CD8-positive, alpha-beta memory T cell (primary cell): ENCODE measurements at regions of chr2 and their contacts with region 1.

Region 1: GRCh38 chr2:120312861-120313694 is 32.9 kb upstream of the INHBB start:
- DNase-seq: peak; percentile 39 to 74 (median 46)
- H3K4me3 ChIP-seq: peak overlapping the region; percentile 54
- H3K4me3 Mint-ChIP-seq: peak overlapping the region; percentile 38 to 92 (median 81)
- H3K27ac ChIP-seq: no peak overlapping the region
- H3K27ac Mint-ChIP-seq: peak overlapping the region in 4 of 8 donors; percentile 51 to 83 (median 68)
- H3K4me1 ChIP-seq: peaks cover 9% of the 10 kb centered on the region
- H3K4me1 Mint-ChIP-seq: peaks cover 15 to 24% (median 16%) of the 10 kb centered on the region in 3 donors
- H3K27me3 ChIP-seq: no peaks in the 10 kb centered on the region
- H3K27me3 Mint-ChIP-seq: peaks cover 8 to 11% of the 10 kb centered on the region in 2 donors

Region 2: GRCh38 chr2:119702918-119703401 is 610.1 kb before region 1 on chr2:
- CTCF ChIA-PET with region 1: interaction called, 13 read pairs
- POLR2A ChIA-PET with region 1: no interaction called
- DNase-seq: peak; percentile 56 to 75 (median 61)
- H3K4me3 ChIP-seq: no peak overlapping the region
- H3K4me3 Mint-ChIP-seq: peak overlapping the region in 1 of 7 donors; percentile 40
- H3K27ac ChIP-seq: no peak overlapping the region
- H3K27ac Mint-ChIP-seq: peak overlapping the region in 3 of 8 donors; percentile 43 to 96 (median 47)
- H3K4me1 ChIP-seq: peaks cover 12% of the 10 kb centered on the region
- H3K4me1 Mint-ChIP-seq: peaks cover 6 to 21% (median 14%) of the 10 kb centered on the region in 3 donors
- H3K27me3 ChIP-seq: no peaks in the 10 kb centered on the region
- H3K27me3 Mint-ChIP-seq: peaks cover 6 to 31% of the 10 kb centered on the region in 2 donors

Region 3: GRCh38 chr2:119809339-119810048 is 503.6 kb before region 1 on chr2:
- CTCF ChIA-PET with region 1: no interaction called
- POLR2A ChIA-PET with region 1: no interaction called
- DNase-seq: no peak
- H3K4me3 ChIP-seq: no peak overlapping the region
- H3K4me3 Mint-ChIP-seq: no peak overlapping the region
- H3K27ac ChIP-seq: no peak overlapping the region
- H3K27ac Mint-ChIP-seq: peak overlapping the region in 3 of 8 donors; percentile 3 to 71 (median 13)
- H3K4me1 ChIP-seq: no peaks in the 10 kb centered on the region
- H3K4me1 Mint-ChIP-seq: peaks cover 44 to 71% (median 67%) of the 10 kb centered on the region in 3 donors
- H3K27me3 ChIP-seq: no peaks in the 10 kb centered on the region
- H3K27me3 Mint-ChIP-seq: no peaks in the 10 kb centered on the region

Region 4: GRCh38 chr2:120109186-120110061 is 203.7 kb before region 1 on chr2:
- CTCF ChIA-PET with region 1: interaction called, 19 read pairs
- POLR2A ChIA-PET with region 1: no interaction called
- DNase-seq: peak in 2 of 5 donors; percentile 38 to 55
- H3K4me3 ChIP-seq: peak overlapping the region; percentile 38
- H3K4me3 Mint-ChIP-seq: peak overlapping the region; percentile 32 to 89 (median 67)
- H3K27ac ChIP-seq: no peak overlapping the region
- H3K27ac Mint-ChIP-seq: peak overlapping the region in 7 of 8 donors; percentile 52 to 78 (median 71)
- H3K4me1 ChIP-seq: peaks cover 20% of the 10 kb centered on the region
- H3K4me1 Mint-ChIP-seq: peaks cover 22 to 26% (median 23%) of the 10 kb centered on the region in 3 donors
- H3K27me3 ChIP-seq: no peaks in the 10 kb centered on the region
- H3K27me3 Mint-ChIP-seq: peaks cover 0 to 2% of the 10 kb centered on the region in 2 donors

Region 5: GRCh38 chr2:120272763-120273481 is 40.2 kb before region 1 on chr2:
- CTCF ChIA-PET with region 1: no interaction called
- POLR2A ChIA-PET with region 1: no interaction called
- DNase-seq: no peak
- H3K4me3 ChIP-seq: no peak overlapping the region
- H3K4me3 Mint-ChIP-seq: no peak overlapping the region
- H3K27ac ChIP-seq: no peak overlapping the region
- H3K27ac Mint-ChIP-seq: no peak overlapping the region
- H3K4me1 ChIP-seq: no peaks in the 10 kb centered on the region
- H3K4me1 Mint-ChIP-seq: peaks cover 19 to 38% (median 21%) of the 10 kb centered on the region in 3 donors
- H3K27me3 ChIP-seq: no peaks in the 10 kb centered on the region
- H3K27me3 Mint-ChIP-seq: no peaks in the 10 kb centered on the region

Region 6: DNA sequence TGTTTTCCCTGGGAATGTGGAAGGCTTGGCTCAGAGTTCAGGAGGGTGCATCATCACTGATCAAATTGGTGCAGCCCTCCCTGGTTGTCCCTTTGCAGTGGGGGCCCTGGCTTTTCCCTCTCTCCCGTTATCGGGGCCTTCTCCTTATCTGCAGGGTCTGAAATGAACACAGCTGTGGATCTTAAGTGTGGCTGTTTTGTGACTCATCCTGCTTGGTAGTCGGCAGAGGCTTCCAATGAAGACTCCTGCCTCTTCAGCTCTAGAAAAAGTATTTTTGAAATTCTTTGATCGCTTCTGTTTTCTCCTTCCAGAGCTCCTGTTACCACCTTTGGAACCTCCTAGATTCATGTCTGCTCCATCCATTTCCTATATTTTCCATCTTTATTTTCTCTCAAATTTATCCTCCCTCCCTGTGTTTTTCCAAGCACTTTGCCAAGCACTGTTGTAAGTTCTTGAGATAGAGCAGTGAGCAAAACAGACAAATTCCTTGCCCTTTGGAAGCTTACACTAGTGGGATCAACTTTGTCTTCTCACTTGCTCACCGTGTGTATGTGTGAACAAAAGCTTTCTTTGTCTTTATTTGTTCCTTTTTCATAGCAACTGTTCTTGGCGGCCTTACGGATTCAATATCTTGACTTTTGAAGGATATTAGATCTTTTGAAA is 14.8 kb before region 1 on chr2:
- CTCF ChIA-PET with region 1: interaction called, 10 read pairs
- POLR2A ChIA-PET with region 1: interaction called, 3 read pairs
- DNase-seq: no peak
- H3K4me3 ChIP-seq: no peak overlapping the region
- H3K4me3 Mint-ChIP-seq: no peak overlapping the region
- H3K27ac ChIP-seq: no peak overlapping the region
- H3K27ac Mint-ChIP-seq: no peak overlapping the region
- H3K4me1 ChIP-seq: no peaks in the 10 kb centered on the region
- H3K4me1 Mint-ChIP-seq: peaks cover 3 to 8% (median 6%) of the 10 kb centered on the region in 3 donors
- H3K27me3 ChIP-seq: no peaks in the 10 kb centered on the region
- H3K27me3 Mint-ChIP-seq: no peaks in the 10 kb centered on the region